ENCODE measurements at regions of chr19 and their contacts with region 1.

Region 1: DNA sequence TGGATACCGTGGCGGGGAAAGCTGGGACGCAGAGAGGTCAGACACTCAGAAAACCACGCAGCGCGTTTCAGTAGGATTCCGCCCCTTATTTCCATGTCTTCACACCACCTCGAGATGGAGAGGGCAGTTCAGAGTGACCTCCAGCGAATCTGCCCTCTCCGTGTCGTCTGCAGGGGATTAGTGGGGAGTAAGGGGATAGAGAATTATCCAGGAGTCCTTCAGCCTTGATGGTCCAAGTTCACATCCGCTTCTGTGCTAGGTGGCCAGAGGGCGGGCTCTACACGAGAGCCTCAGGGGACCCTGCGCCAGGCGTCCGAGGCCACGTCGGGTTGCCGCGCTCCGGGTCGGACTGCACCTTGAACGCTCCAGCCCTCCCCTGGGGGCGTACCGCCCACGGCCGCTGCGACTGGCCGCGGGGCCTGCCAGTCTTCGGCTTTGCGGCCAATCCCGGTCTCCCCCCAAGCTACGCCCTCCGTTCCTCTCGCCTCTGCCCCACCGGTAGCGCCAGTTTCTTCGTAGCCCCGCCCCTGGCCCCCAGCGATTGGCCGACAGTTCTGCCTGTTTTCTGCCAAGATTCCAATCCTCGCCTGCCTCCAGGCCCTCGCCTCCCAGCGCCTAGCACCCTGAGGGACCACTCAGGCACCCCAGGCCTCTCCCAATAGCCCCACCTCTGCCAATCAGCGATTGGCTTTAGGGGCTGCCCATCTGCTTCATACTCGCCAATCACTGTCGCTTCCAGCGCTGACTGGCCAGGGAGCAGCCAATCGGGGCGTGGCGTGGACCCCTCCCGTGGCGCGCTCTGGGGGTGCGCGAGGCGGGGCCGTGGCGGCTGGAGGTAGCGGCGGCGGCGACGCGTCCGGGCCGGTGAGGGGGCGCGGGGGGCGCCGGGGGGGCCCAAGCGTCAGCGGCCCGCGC is at the start of gene SLC25A42:
- DNase-seq: peak; percentile 99
- ATAC-seq: peak; percentile 96
- H3K4me3 Mint-ChIP-seq: peak within 1 kb of the TSS; percentile 75
- H3K27ac Mint-ChIP-seq: peak within 1 kb of the TSS; percentile 85
- H3K4me1 Mint-ChIP-seq: peaks cover 34% of the 10 kb centered on the region
- H3K27me3 Mint-ChIP-seq: no peaks in the 10 kb centered on the region
- total RNA-seq, gene SLC25A42: 10.4 to 10.6 TPM

Region 2: DNA sequence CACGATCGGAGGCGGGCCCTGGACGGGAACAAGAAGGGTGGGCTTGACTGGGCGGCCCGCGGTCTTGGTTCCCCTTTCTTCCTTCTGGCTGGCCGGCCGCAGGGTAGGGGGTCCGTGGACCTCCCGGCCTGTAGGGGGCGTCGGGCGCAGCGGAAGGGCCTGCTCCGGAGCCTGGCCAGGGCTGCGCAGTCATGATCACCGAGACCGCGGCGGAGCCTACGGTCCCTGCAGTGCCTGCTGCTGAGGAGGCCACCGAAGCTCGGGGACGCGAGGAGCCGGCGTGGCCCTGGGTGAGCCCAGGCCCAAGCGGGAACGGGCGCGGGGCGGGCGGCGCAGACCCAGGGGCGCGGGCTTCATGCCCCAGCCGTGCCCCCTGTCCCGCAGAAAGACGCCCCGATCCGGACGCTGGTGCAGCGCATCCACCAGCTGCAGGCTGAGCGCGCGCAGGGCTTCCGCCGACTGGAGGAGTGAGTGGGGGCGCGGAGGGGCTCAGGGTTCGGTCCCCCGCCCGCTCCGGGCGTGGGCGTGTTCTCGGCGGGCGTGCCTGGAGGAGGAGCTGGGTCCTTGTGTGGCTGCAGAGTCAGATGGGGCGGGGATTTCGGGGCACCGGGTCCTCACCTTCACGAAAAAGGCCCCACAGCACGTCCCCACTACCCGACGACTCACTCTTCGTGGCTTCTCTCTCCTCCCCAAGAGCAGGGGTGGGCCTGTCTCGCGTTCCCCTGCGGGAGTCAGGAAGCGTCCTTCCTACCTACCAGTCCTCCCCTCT is 474.6 kb before region 1 on chr19 and contains the start of gene REX1BD:
- CTCF ChIA-PET with region 1: no interaction called
- POLR2A ChIA-PET with region 1: no interaction called
- intact Hi-C with region 1: loop called in 1 of 2 experiments (anchors 5 kb)
- DNase-seq: peak; percentile 91
- ATAC-seq: peak; percentile 81
- H3K4me3 Mint-ChIP-seq: peak within 1 kb of the TSS; percentile 90
- H3K27ac Mint-ChIP-seq: peak within 1 kb of the TSS; percentile 92
- H3K4me1 Mint-ChIP-seq: peaks cover 31% of the 10 kb centered on the region
- H3K27me3 Mint-ChIP-seq: no peaks in the 10 kb centered on the region
- total RNA-seq, gene REX1BD: 47.8 to 81.3 TPM

Region 3: DNA sequence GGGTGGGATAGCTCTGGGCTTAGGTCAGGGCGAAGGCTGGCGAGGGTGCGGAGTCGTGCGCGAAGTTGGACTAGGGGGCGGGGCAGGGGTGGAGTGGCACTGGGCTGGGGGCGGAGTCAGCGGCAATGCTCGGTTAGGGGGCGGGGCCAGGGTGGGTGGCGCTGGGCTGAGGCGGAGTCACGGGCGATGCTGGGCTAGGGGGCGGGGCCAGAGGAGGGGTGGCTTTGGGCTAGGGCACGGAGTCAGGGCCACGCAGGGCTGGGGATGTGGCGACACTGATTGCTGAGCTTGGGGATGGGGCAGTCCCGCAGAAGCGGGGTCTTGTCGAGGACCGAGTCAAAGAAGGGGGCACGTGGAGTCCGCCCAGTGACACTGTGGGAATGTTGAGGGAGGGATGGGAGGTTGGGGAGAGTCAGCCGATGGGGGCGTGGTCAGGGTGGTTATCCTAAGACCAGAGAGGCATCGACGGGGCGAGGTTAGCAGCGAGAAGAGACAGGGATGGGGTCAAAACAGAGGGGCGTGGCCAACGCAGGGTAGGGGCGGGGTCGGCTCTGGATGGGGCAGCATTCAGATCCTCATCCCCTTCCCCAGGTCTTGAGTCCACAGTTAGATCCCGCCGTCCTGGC is 131.1 kb before region 1 on chr19:
- CTCF ChIA-PET with region 1: no interaction called
- POLR2A ChIA-PET with region 1: no interaction called
- intact Hi-C with region 1: loop called in 1 of 2 experiments (anchors 1 kb)
- DNase-seq: peak; percentile 95
- ATAC-seq: peak; percentile 98
- H3K4me3 Mint-ChIP-seq: peak overlapping the region; percentile 53
- H3K27ac Mint-ChIP-seq: no peak overlapping the region
- H3K4me1 Mint-ChIP-seq: peaks cover 6% of the 10 kb centered on the region
- H3K27me3 Mint-ChIP-seq: peaks cover 1% of the 10 kb centered on the region

Region 4: GRCh38 chr19:19138169-19138981 is 74.9 kb after region 1 on chr19 and contains the start of gene TMEM161A:
- CTCF ChIA-PET with region 1: interaction called, 4 read pairs
- POLR2A ChIA-PET with region 1: no interaction called
- intact Hi-C with region 1: loop called (anchors 1 to 2 kb)
- DNase-seq: peak; percentile 98
- ATAC-seq: peak; percentile 100
- H3K4me3 Mint-ChIP-seq: peak within 1 kb of the TSS; percentile 93
- H3K27ac Mint-ChIP-seq: peak within 1 kb of the TSS; percentile 95
- H3K4me1 Mint-ChIP-seq: peaks cover 30% of the 10 kb centered on the region
- H3K27me3 Mint-ChIP-seq: no peaks in the 10 kb centered on the region
- total RNA-seq, gene TMEM161A: 26.8 to 31.9 TPM

Region 5: GRCh38 chr19:19320362-19321142 is 257.1 kb after region 1 on chr19 and contains the starts of genes MAU2 and SUGP1:
- CTCF ChIA-PET with region 1: no interaction called
- POLR2A ChIA-PET with region 1: no interaction called
- intact Hi-C with region 1: loop called in 1 of 2 experiments (anchors 1 kb)
- DNase-seq: peak; percentile 96
- ATAC-seq: peak; percentile 93
- H3K4me3 Mint-ChIP-seq: peak within 1 kb of the TSS; percentile 93
- H3K27ac Mint-ChIP-seq: peak within 1 kb of the TSS; percentile 100
- H3K4me1 Mint-ChIP-seq: peaks cover 39% of the 10 kb centered on the region
- H3K27me3 Mint-ChIP-seq: no peaks in the 10 kb centered on the region
- total RNA-seq, gene MAU2: 33.3 to 45.7 TPM
- total RNA-seq, gene SUGP1: 49.4 to 62.0 TPM

Region 6: DNA sequence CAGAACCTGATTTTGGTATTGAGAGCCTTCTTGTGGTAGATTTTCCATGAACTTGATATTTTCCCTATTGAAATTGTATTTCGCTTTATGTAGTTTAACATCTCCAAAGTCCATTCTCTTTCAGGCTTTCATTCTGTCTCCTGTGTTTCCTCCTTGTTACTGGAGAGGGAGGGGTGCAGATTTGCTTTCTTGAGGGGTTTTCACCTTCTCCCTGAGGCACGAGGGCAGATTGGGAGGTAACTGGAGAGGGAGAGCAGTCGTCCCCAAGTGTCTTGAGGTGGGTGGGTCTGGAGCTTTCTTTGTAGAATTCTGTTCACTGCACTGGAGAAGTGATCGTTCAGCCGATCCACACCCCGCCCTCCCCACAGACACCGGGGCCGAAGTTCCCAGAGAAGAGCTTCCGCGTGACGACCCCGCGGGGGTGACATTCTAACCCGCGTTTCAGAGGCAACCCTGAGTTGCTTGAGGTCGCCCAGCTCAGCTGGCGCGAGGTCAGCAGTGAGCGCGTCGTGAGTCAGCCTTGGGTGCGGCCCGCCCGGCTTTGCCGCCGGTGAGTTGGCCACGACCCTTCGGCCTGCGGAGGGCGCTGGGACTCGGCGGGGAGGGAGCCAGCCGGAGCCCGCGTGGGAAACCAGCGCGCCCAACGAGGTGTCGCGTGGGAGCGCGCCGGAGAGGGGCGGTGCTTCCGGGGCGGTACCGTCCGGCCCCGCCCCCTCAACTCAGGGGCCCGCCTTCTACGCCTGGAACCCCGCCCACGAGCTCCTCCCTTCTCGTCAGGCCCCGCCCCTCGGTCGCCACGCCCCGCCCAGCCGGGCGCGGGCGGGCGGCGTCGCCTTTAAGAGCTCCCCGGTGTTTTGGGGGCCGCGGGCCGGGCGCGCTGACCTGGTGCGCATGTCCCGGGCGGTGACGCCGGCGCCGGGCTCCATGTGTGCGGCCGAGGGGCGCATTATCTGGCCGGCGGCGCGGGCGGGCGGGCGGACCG is 341.7 kb after region 1 on chr19 and contains the start of gene GATAD2A:
- CTCF ChIA-PET with region 1: no interaction called
- POLR2A ChIA-PET with region 1: no interaction called
- intact Hi-C with region 1: loop called in 1 of 2 experiments (anchors 2 kb)
- DNase-seq: peak; percentile 96
- ATAC-seq: peak; percentile 74
- H3K4me3 Mint-ChIP-seq: peak within 1 kb of the TSS; percentile 91
- H3K27ac Mint-ChIP-seq: peak within 1 kb of the TSS; percentile 95
- H3K4me1 Mint-ChIP-seq: peaks cover 69% of the 10 kb centered on the region
- H3K27me3 Mint-ChIP-seq: no peaks in the 10 kb centered on the region
- total RNA-seq, gene GATAD2A: 123 to 139 TPM

Region 7: DNA sequence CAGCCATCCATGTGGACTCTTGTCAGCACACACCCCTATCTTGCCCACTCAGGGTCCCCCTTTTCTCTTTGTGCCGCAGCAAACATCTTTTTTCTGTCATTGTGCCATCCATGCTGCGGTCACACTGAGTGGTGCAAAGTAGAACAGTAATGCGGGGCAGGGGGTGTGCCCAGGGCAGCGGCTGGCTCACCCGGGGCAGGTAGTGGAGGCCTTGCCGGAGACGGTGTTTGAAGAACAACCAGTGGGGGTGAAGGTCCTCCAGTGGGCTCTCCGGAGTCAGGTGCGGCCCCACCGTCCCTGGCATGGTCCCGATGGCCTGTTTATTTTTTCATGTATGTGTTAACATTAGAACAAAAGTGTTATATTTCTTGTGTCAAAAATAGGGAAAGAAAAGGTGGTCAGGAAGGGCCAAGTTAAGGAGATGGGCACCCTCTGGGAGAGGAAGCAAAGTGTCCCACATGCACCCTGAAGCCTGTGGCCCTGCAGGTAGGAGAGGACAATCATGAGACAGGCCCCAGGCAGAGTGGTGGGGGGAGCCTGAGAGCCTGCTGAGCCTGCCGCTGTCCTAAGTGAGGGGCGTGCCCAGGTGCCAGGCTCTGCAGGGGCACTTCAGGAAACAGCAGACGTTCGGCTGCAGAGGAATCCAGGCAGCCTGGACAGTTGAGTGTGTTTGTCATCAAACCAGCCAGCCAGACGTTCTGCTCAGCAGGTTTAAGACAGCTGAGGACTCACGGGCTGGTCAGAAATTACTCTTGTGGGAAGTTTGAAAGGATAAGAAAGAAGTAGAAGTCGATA is 439.6 kb after region 1 on chr19:
- CTCF ChIA-PET with region 1: no interaction called
- POLR2A ChIA-PET with region 1: no interaction called
- intact Hi-C with region 1: no loop called
- DNase-seq: no peak
- ATAC-seq: no peak
- H3K4me3 Mint-ChIP-seq: no peak overlapping the region
- H3K27ac Mint-ChIP-seq: peak overlapping the region; percentile 20
- H3K4me1 Mint-ChIP-seq: no peaks in the 10 kb centered on the region
- H3K27me3 Mint-ChIP-seq: no peaks in the 10 kb centered on the region

Region 8: DNA sequence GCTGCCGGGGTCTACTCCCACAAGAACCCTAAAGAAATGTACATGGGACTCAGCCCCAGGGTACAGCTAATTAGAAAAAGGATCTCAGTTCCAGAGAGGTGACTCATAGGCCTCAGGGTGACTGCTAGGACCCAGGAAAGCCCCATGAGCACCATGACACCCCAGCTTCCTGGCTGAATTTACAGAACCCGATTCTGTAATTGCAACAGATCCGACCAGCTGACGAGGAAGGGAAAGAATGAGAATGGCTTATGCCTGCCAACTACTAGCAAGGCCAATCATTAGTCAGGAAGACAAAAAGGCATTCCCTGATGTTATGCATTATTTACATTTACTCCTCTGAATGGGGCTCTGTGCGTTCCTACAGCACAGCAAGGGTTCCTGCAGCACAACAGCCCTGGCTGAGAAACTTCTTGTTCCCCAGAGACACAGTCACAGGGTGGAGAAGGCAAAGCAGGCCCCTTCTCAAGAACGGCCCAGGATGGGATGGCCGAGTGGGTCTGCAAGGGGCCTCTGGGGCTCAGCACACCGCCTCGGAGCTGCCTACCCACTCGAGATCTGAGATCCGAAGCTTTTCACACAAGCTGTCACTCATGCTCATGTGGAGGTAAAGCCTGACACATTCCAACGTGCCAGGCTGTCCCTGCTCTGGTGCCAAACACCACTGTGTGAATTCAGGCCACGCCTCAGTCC is 527.8 kb after region 1 on chr19:
- CTCF ChIA-PET with region 1: no interaction called
- POLR2A ChIA-PET with region 1: no interaction called
- intact Hi-C with region 1: loop called in 1 of 2 experiments (anchors 10 kb)
- DNase-seq: peak; percentile 85
- ATAC-seq: peak; percentile 91
- H3K4me3 Mint-ChIP-seq: peak overlapping the region; percentile 27
- H3K27ac Mint-ChIP-seq: peak overlapping the region; percentile 82
- H3K4me1 Mint-ChIP-seq: peaks cover 66% of the 10 kb centered on the region
- H3K27me3 Mint-ChIP-seq: no peaks in the 10 kb centered on the region

Measured in activated CD4-positive, alpha-beta T cell treated with anti-CD3 and anti-CD28 coated beads for 36 hours (primary cell).